Gastrocnemius medialis (tissue), 4 donors: ENCODE measurements at regions of chr1 and their contacts with region 1.

Region 1: DNA sequence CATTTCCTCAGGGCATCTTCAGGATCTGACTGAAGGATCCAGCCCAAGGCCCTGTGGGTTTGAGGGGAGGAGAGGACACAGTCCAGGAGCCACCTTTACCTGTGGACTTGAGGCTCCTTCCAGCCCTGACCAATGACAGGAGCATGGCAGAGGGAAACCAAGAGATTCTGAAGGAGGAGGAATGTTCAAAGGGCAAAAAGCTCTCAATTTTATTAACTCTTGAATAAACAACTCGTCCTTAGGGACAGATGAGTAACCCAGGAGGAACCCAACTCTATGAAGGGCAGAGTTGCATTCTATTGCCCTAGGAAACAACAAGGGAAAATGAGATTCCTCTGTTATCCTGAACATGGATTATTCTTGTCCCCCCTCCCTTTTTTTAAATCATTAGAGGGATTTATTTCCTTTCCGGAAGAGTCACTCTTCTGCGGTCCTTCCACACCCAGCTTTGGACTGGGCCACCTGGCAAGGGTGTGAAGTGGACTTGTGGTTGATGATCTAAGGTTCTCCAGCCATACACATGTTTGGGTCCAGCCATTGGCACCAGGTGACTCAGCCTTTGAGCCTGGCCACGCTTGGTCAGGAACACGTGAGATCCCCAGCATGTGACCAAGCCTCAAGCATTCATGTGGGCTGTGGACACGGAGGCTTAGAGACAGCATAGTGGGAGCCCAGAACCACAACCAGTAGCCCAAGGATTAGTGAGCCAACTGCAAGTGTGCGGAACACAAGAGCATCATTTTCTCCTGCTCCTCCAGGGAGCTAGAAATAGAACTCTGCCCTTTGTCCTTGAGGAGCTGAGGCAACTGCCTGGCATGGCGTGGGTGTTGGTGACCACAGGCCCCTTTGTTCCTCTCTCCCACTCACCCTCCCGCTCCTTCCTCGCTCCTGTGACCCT is 49.9 kb downstream of the NENF start:
- DNase-seq: no peak
- ATAC-seq: no peak
- H3K4me3 ChIP-seq: no peak overlapping the region
- H3K27ac ChIP-seq: no peak overlapping the region
- H3K4me1 ChIP-seq: no peaks in the 10 kb centered on the region
- H3K27me3 ChIP-seq: no peaks in the 10 kb centered on the region
- CTCF ChIP-seq: no peak
- POLR2A ChIP-seq: no peak

Region 2: DNA sequence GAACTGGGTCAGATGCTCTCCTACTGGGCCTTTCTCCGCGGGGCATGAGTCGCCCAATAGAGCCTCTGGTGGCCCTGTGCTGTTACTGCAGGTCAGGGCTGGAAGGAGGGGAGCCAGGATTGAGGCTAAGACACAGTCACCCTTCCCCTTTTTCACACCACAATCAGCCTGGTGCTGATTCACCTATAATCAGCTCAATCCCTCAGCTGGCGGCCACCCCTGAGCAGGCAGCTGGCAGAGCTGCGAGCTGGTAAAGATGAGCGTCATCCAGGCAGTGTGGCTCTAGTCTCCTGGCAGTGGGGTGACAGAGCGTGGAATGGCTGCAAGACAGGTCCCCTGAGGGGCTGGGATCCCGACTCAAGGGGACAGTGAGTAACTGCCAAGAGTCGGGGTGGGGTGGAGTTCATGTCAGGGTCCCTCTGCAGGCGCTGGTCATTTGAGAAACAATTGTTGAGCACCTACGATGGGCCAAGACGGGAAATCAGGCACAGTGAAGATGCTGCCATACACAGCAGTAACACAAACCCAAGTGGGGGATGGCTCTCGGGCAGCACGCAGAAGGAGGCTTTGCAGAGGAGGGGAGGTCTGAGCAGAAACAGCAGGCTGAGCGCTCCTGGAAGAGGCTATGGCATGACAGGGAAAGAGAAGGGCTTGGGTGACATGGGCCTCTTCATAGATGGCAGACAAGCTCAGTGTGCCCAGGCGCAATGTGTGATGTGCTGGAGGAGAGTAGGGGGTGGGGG is 147.7 kb after region 1 on chr1:
- in situ Hi-C with region 1: loop called in 2 of 4 experiments (anchors 5 kb)
- intact Hi-C with region 1: loop called (anchors 1 kb)
- DNase-seq: peak; percentile 30 to 47
- ATAC-seq: peak; percentile 68 to 94
- H3K4me3 ChIP-seq: no peak overlapping the region
- H3K27ac ChIP-seq: no peak overlapping the region
- H3K4me1 ChIP-seq: peaks cover 0 to 2% of the 10 kb centered on the region in 2 donors
- H3K27me3 ChIP-seq: peaks cover 0 to 5% (median 4%) of the 10 kb centered on the region in 3 donors
- CTCF ChIP-seq: peak; percentile 72 to 85 (median 77)
- POLR2A ChIP-seq: no peak